Caco-2 (cell line): ENCODE measurements at regions of chr4 and their contacts with region 1.

Region 1: DNA sequence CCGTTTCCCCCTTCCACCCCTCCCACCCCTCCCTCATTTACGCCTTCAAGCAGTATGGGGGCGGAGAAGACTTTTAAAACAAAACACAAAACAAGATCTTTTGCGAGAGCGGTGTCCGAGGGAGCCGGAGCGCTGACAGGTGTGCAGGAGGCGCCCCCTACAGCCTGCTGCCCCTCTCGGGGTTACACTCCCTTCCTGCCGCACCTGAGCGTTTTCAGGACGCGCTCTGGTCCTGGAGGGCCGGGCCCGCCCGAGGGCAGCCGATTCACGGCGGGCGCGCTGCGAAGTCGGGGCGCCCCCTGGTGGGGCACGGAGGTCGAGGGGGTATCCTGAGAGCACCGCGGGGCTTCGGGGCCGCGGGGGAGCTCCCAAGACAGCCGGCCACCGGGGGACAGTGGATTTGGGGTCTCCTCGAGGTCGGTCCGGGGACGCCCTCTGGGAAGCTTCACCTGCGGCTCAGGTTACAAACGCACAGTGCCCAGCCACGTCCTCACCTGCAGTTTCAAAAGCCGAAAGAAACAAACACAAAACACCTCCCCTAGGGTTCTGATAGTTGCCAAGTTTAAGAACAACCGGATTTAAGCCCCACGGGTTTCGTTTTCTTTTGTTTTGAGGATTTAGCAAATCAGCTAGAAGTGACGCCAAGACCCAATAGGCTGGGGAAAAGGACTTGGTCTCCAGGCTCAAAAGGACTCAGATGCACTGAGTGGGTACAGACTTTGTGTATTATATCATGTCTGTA is 8.0 kb upstream of the NEUROG2 start:
- DNase-seq: peak; percentile 84 to 89
- H3K4me3 ChIP-seq: peak overlapping the region; percentile 8
- H3K4me3 Mint-ChIP-seq: peak overlapping the region; percentile 40
- H3K27ac Mint-ChIP-seq: no peak overlapping the region
- H3K4me1 ChIP-seq: no peaks in the 10 kb centered on the region
- H3K4me1 Mint-ChIP-seq: peaks cover 6% of the 10 kb centered on the region
- H3K27me3 ChIP-seq: no peaks in the 10 kb centered on the region
- H3K27me3 Mint-ChIP-seq: peaks cover 21% of the 10 kb centered on the region
- CTCF ChIP-seq: peak; percentile 80 to 84

Region 2: DNA sequence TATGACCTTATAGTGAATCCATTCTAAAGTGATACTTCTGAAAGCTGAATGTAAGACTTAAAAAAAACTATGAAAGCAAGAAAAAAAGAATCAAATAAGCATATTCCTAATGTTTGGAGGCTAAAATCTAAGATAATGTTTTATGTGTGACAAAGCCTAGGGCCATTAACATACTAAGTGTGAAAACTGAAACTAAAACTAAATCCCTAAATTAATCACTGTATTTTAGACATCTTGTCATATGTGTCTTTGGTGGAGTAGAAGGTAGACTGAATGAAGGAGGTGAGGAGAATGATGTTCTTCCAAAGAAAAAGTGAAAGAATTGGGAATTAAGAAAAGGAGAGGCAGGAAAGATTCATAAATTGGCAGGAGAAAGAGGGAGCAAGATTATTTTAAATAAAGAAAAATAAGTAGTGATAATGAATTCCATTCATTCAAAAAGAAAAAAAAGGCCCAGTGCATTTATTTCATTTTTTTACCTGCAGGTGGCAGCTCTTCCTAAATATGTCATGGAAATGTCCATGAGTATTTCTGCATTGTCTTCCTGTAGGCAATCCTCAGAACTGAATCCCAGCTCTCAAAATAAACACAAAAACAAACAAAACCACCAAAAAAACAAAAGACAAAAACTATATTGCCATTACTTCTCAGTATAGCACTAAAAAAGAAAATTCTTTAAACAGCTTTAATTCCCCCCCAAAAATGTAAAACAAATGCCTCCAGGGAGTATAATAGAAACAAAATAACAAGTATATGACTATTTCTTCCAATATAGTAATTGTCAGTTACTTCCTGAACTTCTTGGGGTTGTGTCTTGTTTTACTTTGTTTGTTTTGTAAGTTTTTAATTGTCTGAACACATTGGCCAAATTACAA is 309.3 kb before region 1 on chr4:
- CTCF ChIA-PET with region 1: no interaction called
- POLR2A ChIA-PET with region 1: no interaction called
- intact Hi-C with region 1: loop called (anchors 1 kb)
- DNase-seq: peak in 1 of 2 experiments; percentile 35
- H3K4me3 ChIP-seq: no peak overlapping the region
- H3K4me3 Mint-ChIP-seq: no peak overlapping the region
- H3K27ac Mint-ChIP-seq: no peak overlapping the region
- H3K4me1 ChIP-seq: no peaks in the 10 kb centered on the region
- H3K4me1 Mint-ChIP-seq: no peaks in the 10 kb centered on the region
- H3K27me3 ChIP-seq: no peaks in the 10 kb centered on the region
- H3K27me3 Mint-ChIP-seq: no peaks in the 10 kb centered on the region
- CTCF ChIP-seq: peak; percentile 44 to 51

Region 3: GRCh38 chr4:112327965-112328733 is 195.8 kb before region 1 on chr4:
- CTCF ChIA-PET with region 1: interaction called, 7 read pairs
- POLR2A ChIA-PET with region 1: no interaction called
- intact Hi-C with region 1: loop called (anchors 1 kb)
- DNase-seq: peak in 1 of 2 experiments; percentile 17
- H3K4me3 ChIP-seq: no peak overlapping the region
- H3K4me3 Mint-ChIP-seq: no peak overlapping the region
- H3K27ac Mint-ChIP-seq: no peak overlapping the region
- H3K4me1 ChIP-seq: no peaks in the 10 kb centered on the region
- H3K4me1 Mint-ChIP-seq: no peaks in the 10 kb centered on the region
- H3K27me3 ChIP-seq: no peaks in the 10 kb centered on the region
- H3K27me3 Mint-ChIP-seq: no peaks in the 10 kb centered on the region
- CTCF ChIP-seq: peak; percentile 26 to 49

Region 4: GRCh38 chr4:112509243-112510141 is 14.4 kb before region 1 on chr4:
- CTCF ChIA-PET with region 1: no interaction called
- POLR2A ChIA-PET with region 1: no interaction called
- intact Hi-C with region 1: no loop called
- DNase-seq: no peak
- H3K4me3 ChIP-seq: no peak overlapping the region
- H3K4me3 Mint-ChIP-seq: no peak overlapping the region
- H3K27ac Mint-ChIP-seq: no peak overlapping the region
- H3K4me1 ChIP-seq: peaks cover 3% of the 10 kb centered on the region; the same call in 1 of the 2 replicates
- H3K4me1 Mint-ChIP-seq: no peaks in the 10 kb centered on the region
- H3K27me3 ChIP-seq: no peaks in the 10 kb centered on the region; the same call in 1 of the 2 replicates
- H3K27me3 Mint-ChIP-seq: peaks cover 25% of the 10 kb centered on the region
- CTCF ChIP-seq: no peak

Region 5: DNA sequence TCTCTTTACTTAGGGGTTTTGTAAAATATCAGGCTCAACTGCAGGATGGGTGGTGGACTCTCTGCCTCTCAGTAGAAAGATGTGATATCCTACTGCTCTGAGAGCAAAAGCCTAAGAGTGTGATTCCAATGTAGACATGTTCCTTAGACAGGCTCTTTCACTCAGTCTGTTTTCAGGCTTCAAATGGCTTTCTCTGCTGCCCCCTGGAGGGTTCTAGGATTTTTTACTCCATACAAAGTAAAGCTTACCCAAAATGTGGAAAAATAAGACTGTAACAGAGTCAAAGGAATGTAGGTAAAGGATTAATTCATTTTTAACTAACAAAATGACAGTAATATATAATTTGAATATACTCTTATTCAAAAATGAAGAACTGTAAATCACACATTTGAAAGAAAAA is 80.7 kb after region 1 on chr4:
- CTCF ChIA-PET with region 1: no interaction called
- POLR2A ChIA-PET with region 1: no interaction called
- intact Hi-C with region 1: loop called (anchors 1 kb)
- DNase-seq: peak in 1 of 2 experiments; percentile 61
- H3K4me3 ChIP-seq: no peak overlapping the region
- H3K4me3 Mint-ChIP-seq: no peak overlapping the region
- H3K27ac Mint-ChIP-seq: no peak overlapping the region
- H3K4me1 ChIP-seq: no peaks in the 10 kb centered on the region
- H3K4me1 Mint-ChIP-seq: no peaks in the 10 kb centered on the region
- H3K27me3 ChIP-seq: no peaks in the 10 kb centered on the region
- H3K27me3 Mint-ChIP-seq: no peaks in the 10 kb centered on the region
- CTCF ChIP-seq: peak; percentile 54 to 62